ENCODE measurements at regions of chr5 and their contacts with region 1.

Region 1: GRCh38 chr5:71767661-71768060 is 48.6 kb downstream of the CARTPT start:
- DNase-seq: no peak
- H3K4me3 ChIP-seq: no peak overlapping the region
- H3K27ac ChIP-seq: no peak overlapping the region
- H3K4me1 ChIP-seq: no peaks in the 10 kb centered on the region
- H3K27me3 ChIP-seq: no peaks in the 10 kb centered on the region
- CTCF ChIP-seq: no peak

Region 2: DNA sequence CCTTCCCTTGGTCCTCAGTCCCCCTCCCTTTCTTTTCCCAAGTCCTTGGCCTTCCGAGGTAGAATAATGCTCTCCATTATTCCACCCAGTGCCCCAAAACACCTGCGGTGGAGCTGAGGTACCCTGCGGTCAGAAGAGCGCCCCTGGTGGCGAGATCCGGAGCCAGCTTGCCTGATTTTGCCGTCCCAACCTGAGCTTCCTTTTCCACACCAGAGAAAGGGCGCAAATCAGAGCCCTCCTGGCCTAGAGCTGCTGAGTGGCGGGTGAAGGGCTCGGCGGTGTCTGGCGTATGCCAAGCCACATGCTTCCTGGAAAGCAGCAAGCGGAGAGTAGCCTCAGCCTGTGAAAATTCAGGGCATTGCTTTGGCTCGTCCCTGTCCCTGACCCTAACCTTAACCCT is 69.7 kb before region 1 on chr5:
- CTCF ChIA-PET with region 1: no interaction called
- POLR2A ChIA-PET with region 1: no interaction called
- intact Hi-C with region 1: no loop called
- DNase-seq: no peak
- H3K4me3 ChIP-seq: no peak overlapping the region
- H3K27ac ChIP-seq: no peak overlapping the region
- H3K4me1 ChIP-seq: 0 out of 2 replicates have a peak, but pooled peaks cover 5% of the 10 kb centered on the region
- H3K27me3 ChIP-seq: no peaks in the 10 kb centered on the region
- CTCF ChIP-seq: peak; percentile 43; the same call in 1 of the 2 replicates

Region 3: GRCh38 chr5:71816307-71816706 is 48.6 kb after region 1 on chr5:
- CTCF ChIA-PET with region 1: no interaction called
- POLR2A ChIA-PET with region 1: interaction called, 11 read pairs
- intact Hi-C with region 1: no loop called
- DNase-seq: peak; percentile 40 to 52
- H3K4me3 ChIP-seq: no peak overlapping the region
- H3K27ac ChIP-seq: no peak overlapping the region
- H3K4me1 ChIP-seq: no peaks in the 10 kb centered on the region
- H3K27me3 ChIP-seq: no peaks in the 10 kb centered on the region
- CTCF ChIP-seq: no peak

Region 4: GRCh38 chr5:72138943-72139521 is 371.4 kb after region 1 on chr5:
- CTCF ChIA-PET with region 1: no interaction called
- POLR2A ChIA-PET with region 1: no interaction called
- intact Hi-C with region 1: no loop called
- DNase-seq: no peak
- H3K4me3 ChIP-seq: no peak overlapping the region
- H3K27ac ChIP-seq: no peak overlapping the region
- H3K4me1 ChIP-seq: peaks cover 27% of the 10 kb centered on the region
- H3K27me3 ChIP-seq: no peaks in the 10 kb centered on the region
- CTCF ChIP-seq: no peak

Region 5: DNA sequence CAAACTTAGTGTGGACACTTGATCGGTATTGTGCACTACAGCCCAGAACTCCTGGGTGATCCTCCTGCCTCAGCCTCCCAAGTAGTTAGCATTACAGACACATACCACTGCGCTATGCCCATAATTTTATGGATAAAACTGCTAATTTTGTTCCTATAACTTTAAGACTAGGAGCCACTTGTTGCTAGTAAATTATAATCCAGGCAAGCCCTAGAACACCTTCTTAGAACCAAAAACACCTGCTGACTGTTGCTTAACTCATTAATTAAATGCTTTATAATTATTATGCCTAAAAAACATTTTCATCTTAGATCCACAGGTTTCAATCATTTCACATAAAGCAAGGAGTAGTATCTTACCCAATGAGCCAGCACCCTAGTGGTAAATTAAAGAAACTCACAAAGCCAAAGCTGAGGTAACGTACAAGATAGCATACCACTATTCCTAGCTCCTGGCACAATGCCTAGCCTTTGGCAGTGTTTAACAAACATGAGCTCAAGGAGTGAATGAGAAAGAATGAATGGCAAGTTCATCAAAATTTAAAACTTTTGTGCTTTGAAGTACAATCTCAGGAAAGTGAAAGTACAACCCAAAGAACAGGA is 547.0 kb after region 1 on chr5:
- CTCF ChIA-PET with region 1: interaction called, 11 read pairs
- POLR2A ChIA-PET with region 1: no interaction called
- intact Hi-C with region 1: no loop called
- DNase-seq: peak in 1 of 2 experiments; percentile 35
- H3K4me3 ChIP-seq: no peak overlapping the region
- H3K27ac ChIP-seq: no peak overlapping the region
- H3K4me1 ChIP-seq: peaks cover 8% of the 10 kb centered on the region
- H3K27me3 ChIP-seq: no peaks in the 10 kb centered on the region
- CTCF ChIP-seq: no peak

Measured in PC-9 (cell line).